Activated CD4-positive, alpha-beta T cell treated with anti-CD3 and anti-CD28 coated beads for 36 hours (primary cell): ENCODE measurements at regions of chr12 and their contacts with region 1.

Region 1: DNA sequence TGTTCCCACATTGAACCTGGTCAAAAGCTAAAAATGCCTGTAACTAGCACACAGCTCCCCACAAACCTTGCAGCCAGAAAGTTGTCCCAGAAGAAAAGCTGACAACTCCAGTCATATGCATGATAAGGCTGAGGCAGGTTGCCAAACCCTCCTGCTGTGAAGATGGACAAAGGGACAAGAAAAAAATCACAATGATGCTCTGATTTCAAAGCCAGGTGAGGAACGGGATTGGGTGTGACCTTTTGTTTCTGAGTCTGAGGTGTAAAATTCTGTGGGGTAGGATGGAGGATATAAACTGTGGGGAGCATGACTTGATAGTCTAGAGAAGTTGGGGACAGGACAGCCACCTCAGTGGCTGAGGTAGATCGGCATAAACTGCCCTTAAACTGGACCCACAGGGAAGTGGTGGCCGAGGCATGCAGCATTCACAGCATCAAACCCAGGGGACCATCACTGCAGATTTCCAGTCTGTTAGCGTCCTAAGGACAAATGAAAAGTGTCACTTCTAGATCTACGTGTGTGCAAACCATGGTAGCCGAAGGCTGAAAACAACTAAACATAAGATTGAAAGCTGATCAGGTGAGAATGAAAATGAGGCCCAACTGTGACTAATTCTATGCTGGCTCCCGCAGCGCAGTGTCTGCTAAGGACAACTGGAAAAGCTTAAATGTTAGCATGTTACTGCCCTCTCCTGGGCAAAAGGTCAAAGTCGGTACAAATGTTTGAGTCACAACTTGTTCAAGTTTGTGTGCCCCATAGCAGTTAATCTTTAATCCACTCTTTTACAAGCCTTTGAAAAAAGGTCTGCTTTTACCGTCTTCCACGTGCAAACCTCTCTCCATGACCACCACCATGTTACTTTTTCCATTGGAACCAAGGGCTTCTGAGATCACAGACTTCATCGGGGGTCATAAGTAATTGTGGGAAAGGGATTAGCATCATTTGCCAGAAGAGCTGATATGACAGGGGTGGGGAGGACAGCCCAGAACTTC is 39.8 kb downstream of the GRIN2B start:
- DNase-seq: peak; percentile 46
- ATAC-seq: peak; percentile 55
- H3K4me3 Mint-ChIP-seq: no peak overlapping the region
- H3K27ac Mint-ChIP-seq: no peak overlapping the region
- H3K4me1 Mint-ChIP-seq: no peaks in the 10 kb centered on the region
- H3K27me3 Mint-ChIP-seq: peaks cover 23% of the 10 kb centered on the region

Region 2: GRCh38 chr12:13864081-13864673 is 77.4 kb before region 1 on chr12:
- CTCF ChIA-PET with region 1: interaction called, 6 read pairs
- POLR2A ChIA-PET with region 1: no interaction called
- intact Hi-C with region 1: loop called (anchors 1 to 2 kb)
- DNase-seq: peak; percentile 82
- ATAC-seq: peak; percentile 78
- H3K4me3 Mint-ChIP-seq: no peak overlapping the region
- H3K27ac Mint-ChIP-seq: no peak overlapping the region
- H3K4me1 Mint-ChIP-seq: no peaks in the 10 kb centered on the region
- H3K27me3 Mint-ChIP-seq: peaks cover 18% of the 10 kb centered on the region